Right ventricle myocardium inferior (tissue), 1 donor: ENCODE measurements at regions of chr9 and their contacts with region 1.

Region 1: DNA sequence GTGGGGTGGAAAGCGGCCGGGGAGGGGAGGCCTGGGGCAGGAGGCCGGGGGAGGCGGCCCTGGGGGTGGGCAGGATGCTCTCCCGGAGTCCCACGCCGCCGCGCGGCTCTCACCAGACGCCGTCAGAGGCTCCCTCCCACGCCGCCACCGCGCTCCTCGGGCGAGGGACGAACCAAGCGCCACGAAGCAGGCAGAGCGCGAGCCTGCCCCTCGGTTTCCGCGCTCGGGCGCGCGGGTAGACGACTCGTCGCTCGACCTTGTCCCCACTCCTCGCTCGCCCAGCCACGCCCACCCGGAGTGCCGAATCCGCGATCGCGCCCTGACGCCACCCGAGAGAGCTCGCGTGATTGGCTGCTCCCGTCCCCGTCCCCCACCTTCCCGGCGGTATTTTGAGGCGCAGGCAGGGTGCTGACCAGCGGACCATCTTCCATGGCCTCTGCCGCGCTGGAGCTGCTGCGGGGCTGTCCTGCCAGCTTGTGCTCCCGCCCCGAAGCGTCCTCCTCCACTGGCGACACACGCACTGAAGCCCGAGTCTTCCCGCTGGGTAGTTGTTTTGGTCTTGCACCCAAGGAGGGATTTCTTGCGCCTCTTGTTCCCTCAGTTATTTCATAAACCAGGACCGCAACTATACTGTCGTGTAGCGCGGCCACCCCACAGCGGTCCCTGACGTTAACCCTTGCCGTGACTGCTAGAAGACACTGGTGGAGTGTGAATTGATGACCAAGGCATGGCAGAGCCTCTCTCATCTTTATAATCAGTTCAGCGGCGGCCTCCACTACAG is at the start of gene GNE:
- DNase-seq: peak; percentile 98
- ATAC-seq: peak; percentile 99
- total RNA-seq, gene GNE: 10.9 TPM

Region 2: DNA sequence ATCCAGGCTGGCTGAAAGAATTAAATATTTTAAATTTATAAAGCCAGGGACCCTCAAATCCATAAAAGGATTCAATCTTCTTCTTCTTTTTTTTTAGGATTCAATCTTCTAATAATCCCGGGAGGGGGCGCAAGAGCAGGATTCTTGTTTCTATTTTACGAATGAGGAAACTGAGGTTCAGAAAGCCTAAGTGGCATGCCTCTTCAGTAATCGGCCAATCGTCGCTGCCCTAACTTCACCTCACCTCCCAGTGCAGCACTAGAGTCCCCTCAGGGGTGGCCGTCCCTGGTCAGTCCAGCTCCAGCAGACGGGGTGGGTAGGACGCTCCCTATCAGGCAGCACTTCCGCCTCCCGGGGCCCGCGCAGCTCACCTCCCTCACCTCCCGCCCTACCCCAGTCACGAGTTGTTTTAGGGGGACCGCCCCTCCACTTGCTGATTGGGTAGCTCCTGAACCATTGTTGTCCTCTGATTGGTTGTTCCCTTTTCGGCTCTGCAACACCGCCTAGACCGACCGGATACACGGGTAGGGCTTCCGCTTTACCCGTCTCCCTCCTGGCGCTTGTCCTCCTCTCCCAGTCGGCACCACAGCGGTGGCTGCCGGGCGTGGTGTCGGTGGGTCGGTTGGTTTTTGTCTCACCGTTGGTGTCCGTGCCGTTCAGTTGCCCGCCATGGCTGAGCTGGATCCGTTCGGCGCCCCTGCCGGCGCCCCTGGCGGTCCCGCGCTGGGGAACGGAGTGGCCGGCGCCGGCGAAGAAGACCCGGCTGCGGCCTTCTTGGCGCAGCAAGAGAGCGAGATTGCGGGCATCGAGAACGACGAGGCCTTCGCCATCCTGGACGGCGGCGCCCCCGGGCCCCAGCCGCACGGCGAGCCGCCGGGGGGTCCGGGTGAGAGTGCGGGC is 67.8 kb before region 1 on chr9 and contains the start of gene CLTA:
- intact Hi-C with region 1: loop called (anchors 2 kb)
- DNase-seq: peak; percentile 97
- ATAC-seq: peak; percentile 99
- total RNA-seq, gene CLTA: 69.4 TPM

Region 3: DNA sequence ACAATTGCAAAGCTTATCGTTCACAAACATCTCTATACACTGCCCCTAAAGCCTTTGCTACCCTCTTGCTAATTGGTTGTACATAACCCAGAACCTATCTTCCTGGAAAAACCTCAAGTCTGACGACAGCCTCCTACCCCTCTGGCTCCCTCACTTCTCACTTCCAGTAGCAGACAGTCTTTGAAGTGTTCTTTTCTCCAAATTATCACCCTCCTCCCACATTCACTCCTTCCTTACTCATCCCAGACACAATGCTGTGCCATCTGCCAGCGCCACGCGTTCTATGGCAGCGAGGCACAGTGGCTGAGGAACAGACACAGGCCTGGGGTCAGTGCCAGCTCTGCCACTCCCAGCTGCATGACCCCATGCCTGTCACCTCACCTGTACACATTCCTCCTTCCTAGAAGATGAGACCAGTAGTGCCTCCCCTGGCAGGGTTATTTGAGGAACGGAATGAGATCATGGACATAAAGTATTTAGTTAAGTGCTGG is 39.9 kb before region 1 on chr9:
- intact Hi-C with region 1: no loop called
- DNase-seq: no peak
- ATAC-seq: no peak